ENCODE measurements at regions of chr1 and their contacts with region 1.

Region 1: DNA sequence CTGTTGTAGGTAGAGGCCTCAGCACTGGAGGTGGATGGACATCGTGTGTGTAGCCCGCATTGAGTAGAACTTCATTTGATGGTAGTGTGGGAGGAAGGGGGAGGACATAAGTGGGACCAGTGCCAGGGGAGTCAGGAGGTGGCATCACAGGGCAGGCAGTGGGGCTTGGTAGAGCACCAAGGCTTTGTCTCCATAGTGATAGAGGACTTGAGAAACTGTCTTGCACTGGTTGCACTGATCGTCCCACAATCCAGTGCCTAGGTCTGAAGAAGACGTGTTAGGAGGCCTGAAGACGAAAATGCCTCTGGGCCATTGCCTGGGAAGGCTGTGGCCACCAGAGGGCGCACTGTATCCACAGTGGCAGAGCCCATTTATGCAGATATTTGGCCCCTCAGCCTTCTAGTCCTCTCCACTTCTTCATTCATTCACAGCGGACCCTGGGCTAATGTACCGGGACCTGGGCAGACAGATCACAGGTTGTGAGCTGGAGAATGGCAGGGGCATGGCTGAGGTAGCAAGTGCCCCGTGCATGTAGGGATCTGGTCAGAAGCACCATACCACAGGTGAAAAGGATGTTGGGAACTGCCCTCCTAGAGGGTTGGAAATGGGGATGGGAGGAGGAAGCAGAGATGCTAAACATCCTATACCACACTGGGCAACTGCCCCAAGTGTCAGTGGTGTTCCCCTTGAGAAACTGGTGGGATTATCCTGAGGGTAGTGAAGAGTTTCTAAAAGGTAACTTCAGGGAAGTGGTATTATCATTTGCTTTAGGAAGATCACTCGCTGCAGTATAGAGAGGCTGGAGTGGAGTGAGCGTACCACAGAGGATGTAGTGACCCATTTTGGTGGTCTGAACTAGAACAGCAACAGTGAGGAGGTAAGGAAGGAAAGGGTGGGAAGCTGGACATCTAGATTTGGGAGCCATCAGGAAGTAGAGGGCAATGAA is 95.3 kb downstream of the PIK3R3 start:
- DNase-seq: peak; percentile 78 to 90 (median 83)
- H3K4me3 ChIP-seq: no peak overlapping the region
- H3K27ac ChIP-seq: no peak overlapping the region
- H3K4me1 ChIP-seq: peaks cover 0 to 10% (median 6%) of the 10 kb centered on the region in 4 experiments
- H3K27me3 ChIP-seq: no peaks in the 10 kb centered on the region

Region 2: GRCh38 chr1:46026531-46026930 is 10.6 kb before region 1 on chr1:
- CTCF ChIA-PET with region 1: interaction called, 17 read pairs
- POLR2A ChIA-PET with region 1: no interaction called
- DNase-seq: no peak
- H3K4me3 ChIP-seq: no peak overlapping the region
- H3K27ac ChIP-seq: no peak overlapping the region
- H3K4me1 ChIP-seq: no peaks in the 10 kb centered on the region
- H3K27me3 ChIP-seq: no peaks in the 10 kb centered on the region

Region 3: GRCh38 chr1:46166521-46167462 is 129.6 kb after region 1 on chr1:
- CTCF ChIA-PET with region 1: interaction called, 12 read pairs
- POLR2A ChIA-PET with region 1: no interaction called
- DNase-seq: peak in 2 of 3 donors; percentile 78 to 80
- H3K4me3 ChIP-seq: peak overlapping the region; percentile 40 to 87 (median 75)
- H3K27ac ChIP-seq: no peak overlapping the region
- H3K4me1 ChIP-seq: peaks cover 0 to 15% (median 13%) of the 10 kb centered on the region in 4 experiments
- H3K27me3 ChIP-seq: peaks cover 0 to 11% (median 0%) of the 10 kb centered on the region in 5 experiments

Region 4: DNA sequence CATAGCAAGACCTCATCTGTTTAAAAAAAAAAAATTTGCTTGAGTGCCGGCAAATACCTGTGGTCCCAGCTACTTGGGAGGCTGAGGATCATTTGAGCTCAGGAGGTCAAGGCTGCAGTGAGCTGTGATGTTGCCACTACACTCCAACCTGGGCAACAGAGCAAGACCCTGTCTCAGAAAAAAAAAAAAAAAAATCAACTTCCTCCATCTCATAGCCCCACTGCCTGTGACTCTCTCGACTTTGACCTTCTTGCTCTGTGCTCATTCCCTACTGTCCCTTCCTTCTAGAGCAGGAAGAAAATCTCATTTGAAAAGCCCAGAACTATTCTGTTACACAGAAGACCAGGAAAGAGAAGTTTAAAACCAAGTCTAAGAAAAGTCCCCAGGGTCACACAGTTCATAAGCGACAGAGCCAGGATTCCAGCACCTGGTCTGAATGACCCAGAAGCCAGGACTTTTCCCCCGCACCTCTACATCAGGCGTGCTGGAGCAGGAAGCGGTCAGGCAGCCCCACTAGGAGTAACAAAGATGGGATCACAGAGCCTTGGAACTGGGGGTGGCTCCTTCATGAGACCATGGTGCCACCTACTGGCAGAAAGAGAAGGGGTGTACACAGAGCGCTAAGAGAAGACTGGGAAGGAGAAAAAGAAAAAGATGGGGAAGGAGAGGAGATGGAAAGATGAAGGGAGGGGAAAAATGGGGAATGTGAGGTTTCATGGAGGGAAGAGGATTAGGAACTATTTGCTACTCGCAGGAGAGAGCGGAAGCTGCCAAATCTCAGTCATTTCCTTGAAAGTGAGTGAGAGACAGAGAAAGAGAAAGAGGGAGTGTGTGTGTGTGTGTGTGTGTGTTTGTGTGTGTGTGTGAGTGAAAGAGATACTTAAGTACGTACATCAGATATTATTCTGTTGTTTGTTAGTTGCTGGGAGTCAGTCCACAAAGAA is 142.2 kb after region 1 on chr1:
- CTCF ChIA-PET with region 1: interaction called, 167 read pairs
- POLR2A ChIA-PET with region 1: no interaction called
- DNase-seq: peak; percentile 65 to 72 (median 67)
- H3K4me3 ChIP-seq: peak overlapping the region in 3 of 7 experiments; percentile 22 to 62 (median 50)
- H3K27ac ChIP-seq: no peak overlapping the region
- H3K4me1 ChIP-seq: peaks cover 0 to 14% (median 7%) of the 10 kb centered on the region in 4 experiments
- H3K27me3 ChIP-seq: no peaks in the 10 kb centered on the region

Measured in common myeloid progenitor, CD34-positive (primary cell).